ENCODE measurements at regions of chr13 and their contacts with region 1.

Region 1: GRCh38 chr13:99087096-99087953 is 109.5 kb upstream of the DOCK9 start:
- DNase-seq: peak; percentile 94
- H3K4me3 Mint-ChIP-seq: peak overlapping the region; percentile 99
- H3K27ac Mint-ChIP-seq: peak overlapping the region; percentile 97
- H3K4me1 Mint-ChIP-seq: peaks cover 30% of the 10 kb centered on the region
- H3K27me3 Mint-ChIP-seq: no peaks in the 10 kb centered on the region

Region 2: DNA sequence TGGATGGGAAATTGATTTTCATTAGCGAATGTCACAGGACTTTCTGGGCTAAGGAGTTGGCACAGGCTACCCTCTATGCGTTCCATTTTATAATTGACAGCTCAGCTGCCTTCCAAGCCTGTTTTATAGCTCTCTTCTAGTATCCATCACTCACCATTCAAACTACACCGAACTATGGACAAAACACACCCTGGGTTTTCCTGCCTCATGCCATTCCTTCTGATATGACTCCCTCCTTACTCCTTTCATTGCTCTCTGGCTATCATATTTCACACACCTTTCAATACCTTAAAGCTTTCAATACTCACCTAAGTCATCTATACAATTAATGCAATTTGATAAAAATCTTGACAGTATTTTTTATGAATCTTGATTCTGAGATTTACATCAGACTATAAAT is 1472.1 kb before region 1 on chr13:
- CTCF ChIA-PET with region 1: no interaction called
- intact Hi-C with region 1: no loop called
- DNase-seq: no peak
- H3K4me3 Mint-ChIP-seq: no peak overlapping the region
- H3K27ac Mint-ChIP-seq: no peak overlapping the region
- H3K4me1 Mint-ChIP-seq: no peaks in the 10 kb centered on the region
- H3K27me3 Mint-ChIP-seq: peaks cover 17% of the 10 kb centered on the region

Region 3: GRCh38 chr13:97975848-97976609 is 1111.3 kb before region 1 on chr13:
- CTCF ChIA-PET with region 1: no interaction called
- intact Hi-C with region 1: loop called (anchors 1 kb)
- DNase-seq: peak; percentile 89
- H3K4me3 Mint-ChIP-seq: peak overlapping the region; percentile 92
- H3K27ac Mint-ChIP-seq: peak overlapping the region; percentile 97
- H3K4me1 Mint-ChIP-seq: peaks cover 28% of the 10 kb centered on the region
- H3K27me3 Mint-ChIP-seq: no peaks in the 10 kb centered on the region

Region 4: GRCh38 chr13:98972627-98973026 is 114.7 kb before region 1 on chr13:
- CTCF ChIA-PET with region 1: no interaction called
- intact Hi-C with region 1: no loop called
- DNase-seq: no peak
- H3K4me3 Mint-ChIP-seq: no peak overlapping the region
- H3K27ac Mint-ChIP-seq: no peak overlapping the region
- H3K4me1 Mint-ChIP-seq: peaks cover 74% of the 10 kb centered on the region
- H3K27me3 Mint-ChIP-seq: no peaks in the 10 kb centered on the region

Region 5: DNA sequence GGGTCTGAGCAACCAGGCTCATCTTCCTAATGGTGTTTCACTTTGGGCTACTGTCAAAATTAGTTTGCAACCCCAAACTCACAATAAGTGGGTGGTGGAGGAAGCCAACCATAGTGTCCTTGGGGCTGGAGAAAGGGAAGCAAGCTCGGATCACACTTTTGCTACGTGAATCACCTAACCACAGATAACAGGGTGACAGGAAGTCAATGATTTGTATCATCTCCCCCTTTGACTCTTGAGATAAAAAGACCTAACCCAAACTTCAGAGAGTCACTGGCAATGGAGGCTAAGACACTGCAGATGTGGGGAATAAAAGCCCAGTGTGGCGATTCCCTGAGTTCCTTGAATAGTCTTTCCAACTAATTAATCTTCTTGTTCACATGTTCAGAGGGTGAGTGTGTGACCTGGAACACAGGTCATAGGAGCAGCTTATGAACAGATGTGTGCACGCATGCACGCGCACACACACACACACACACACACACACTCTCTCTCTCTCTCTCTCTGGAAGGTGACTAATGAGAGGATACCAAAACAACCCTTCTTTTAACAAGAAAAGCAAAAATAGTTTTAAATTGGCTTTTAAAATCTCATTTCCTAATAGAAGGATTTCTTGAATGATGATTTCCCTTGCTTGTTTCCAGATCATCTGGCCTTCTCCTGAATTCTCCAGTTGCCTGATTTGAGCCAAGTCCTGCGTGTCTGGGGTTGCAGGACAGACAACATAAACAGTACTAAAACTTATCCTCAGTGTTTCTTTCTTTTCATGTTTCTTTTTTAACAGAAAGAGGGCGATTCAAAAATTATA is 88.3 kb before region 1 on chr13:
- CTCF ChIA-PET with region 1: no interaction called
- intact Hi-C with region 1: loop called (anchors 2 kb)
- DNase-seq: peak; percentile 66
- H3K4me3 Mint-ChIP-seq: no peak overlapping the region
- H3K27ac Mint-ChIP-seq: peak overlapping the region; percentile 67
- H3K4me1 Mint-ChIP-seq: peaks cover 92% of the 10 kb centered on the region
- H3K27me3 Mint-ChIP-seq: no peaks in the 10 kb centered on the region

Region 6: GRCh38 chr13:99051768-99052455 is 35.4 kb before region 1 on chr13:
- CTCF ChIA-PET with region 1: interaction called, 5 read pairs
- intact Hi-C with region 1: loop called (anchors 1 kb)
- DNase-seq: no peak
- H3K4me3 Mint-ChIP-seq: peak overlapping the region; percentile 33
- H3K27ac Mint-ChIP-seq: peak overlapping the region; percentile 77
- H3K4me1 Mint-ChIP-seq: peaks cover 80% of the 10 kb centered on the region
- H3K27me3 Mint-ChIP-seq: no peaks in the 10 kb centered on the region

Region 7: GRCh38 chr13:99119686-99120085 is 32.4 kb after region 1 on chr13:
- CTCF ChIA-PET with region 1: no interaction called
- intact Hi-C with region 1: loop called (anchors 1 kb)
- DNase-seq: peak; percentile 60
- H3K4me3 Mint-ChIP-seq: no peak overlapping the region
- H3K27ac Mint-ChIP-seq: no peak overlapping the region
- H3K4me1 Mint-ChIP-seq: peaks cover 39% of the 10 kb centered on the region
- H3K27me3 Mint-ChIP-seq: no peaks in the 10 kb centered on the region

Region 8: GRCh38 chr13:99200432-99201167 is 113.3 kb after region 1 on chr13 and contains the start of gene UBAC2:
- CTCF ChIA-PET with region 1: no interaction called
- intact Hi-C with region 1: loop called (anchors 1 kb)
- DNase-seq: peak; percentile 95
- H3K4me3 Mint-ChIP-seq: peak within 1 kb of the TSS; percentile 91
- H3K27ac Mint-ChIP-seq: peak within 1 kb of the TSS; percentile 90
- H3K4me1 Mint-ChIP-seq: peaks cover 60% of the 10 kb centered on the region
- H3K27me3 Mint-ChIP-seq: no peaks in the 10 kb centered on the region
- total RNA-seq, gene UBAC2: 43.4 to 44.9 TPM

Region 9: GRCh38 chr13:99228737-99229691 is 141.7 kb after region 1 on chr13:
- CTCF ChIA-PET with region 1: no interaction called
- intact Hi-C with region 1: no loop called
- DNase-seq: no peak
- H3K4me3 Mint-ChIP-seq: peak overlapping the region; percentile 56
- H3K27ac Mint-ChIP-seq: peak overlapping the region; percentile 54
- H3K4me1 Mint-ChIP-seq: peaks cover 75% of the 10 kb centered on the region
- H3K27me3 Mint-ChIP-seq: no peaks in the 10 kb centered on the region